Activated T-helper 2 cell treated with anti-CD3 and anti-CD28 coated beads, Interferon-gamma antibody, Interleukin-2, Interleukin-4, amounts not matched to agents 10 μg/mL and 5 μg/mL and 100 μg/mL, durations not matched to agents 14 hours and 24 hours and 36 hours (primary cell): ENCODE measurements at regions of chr13 and their contacts with region 1.

Region 1: GRCh38 chr13:77389625-77390000 is 62.7 kb upstream of the MYCBP2 start:
- DNase-seq: no peak
- H3K4me3 Mint-ChIP-seq: no peak overlapping the region
- H3K27ac Mint-ChIP-seq: peak overlapping the region; percentile 34
- H3K4me1 Mint-ChIP-seq: peaks cover 41% of the 10 kb centered on the region
- H3K27me3 Mint-ChIP-seq: peaks cover 29% of the 10 kb centered on the region

Region 2: GRCh38 chr13:77345150-77345780 is 44.3 kb before region 1 on chr13:
- intact Hi-C with region 1: loop called (anchors 1 kb)
- DNase-seq: no peak
- H3K4me3 Mint-ChIP-seq: no peak overlapping the region
- H3K27ac Mint-ChIP-seq: peak overlapping the region; percentile 80
- H3K4me1 Mint-ChIP-seq: peaks cover 14% of the 10 kb centered on the region
- H3K27me3 Mint-ChIP-seq: no peaks in the 10 kb centered on the region

Region 3: DNA sequence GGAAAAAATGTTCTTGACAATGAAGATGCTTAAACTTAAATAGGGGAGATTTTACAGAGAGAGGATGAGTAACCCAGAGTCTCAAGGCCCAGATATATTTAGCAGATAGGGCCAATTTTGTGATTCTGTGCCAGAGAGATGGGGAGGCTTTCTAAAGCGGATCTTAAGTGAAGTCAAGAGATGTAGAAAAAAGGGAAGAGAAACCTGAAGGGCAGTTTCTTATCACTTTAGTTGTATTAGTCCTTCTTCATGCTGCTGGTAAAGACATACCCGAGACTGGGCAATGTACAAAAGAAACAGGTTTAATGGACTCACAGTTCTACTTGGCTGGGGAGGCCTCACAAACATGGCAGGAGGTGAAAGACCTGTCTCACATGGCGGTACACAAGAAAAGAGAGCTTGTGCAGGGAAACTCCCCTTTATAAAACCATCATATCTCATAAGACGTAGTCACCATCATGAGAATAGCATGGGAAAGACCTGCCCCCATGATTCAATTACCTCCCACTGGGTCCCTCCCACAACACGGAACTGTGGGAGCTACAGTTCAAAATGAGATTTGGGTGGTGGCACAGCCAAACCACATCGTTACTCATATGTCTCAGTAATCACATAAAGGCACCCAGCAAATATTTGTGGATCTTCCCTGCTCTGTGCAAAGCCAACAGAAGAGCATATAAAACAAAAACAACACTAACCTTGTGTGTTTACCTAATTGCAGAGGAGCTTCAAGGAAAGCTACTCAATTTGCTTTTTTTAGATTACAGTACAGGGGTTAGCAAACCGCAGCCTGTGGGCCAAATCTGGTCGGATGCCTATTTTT is 39.9 kb after region 1 on chr13:
- intact Hi-C with region 1: loop called (anchors 1 kb)
- DNase-seq: no peak
- H3K4me3 Mint-ChIP-seq: no peak overlapping the region
- H3K27ac Mint-ChIP-seq: peak overlapping the region; percentile 60
- H3K4me1 Mint-ChIP-seq: peaks cover 13% of the 10 kb centered on the region
- H3K27me3 Mint-ChIP-seq: peaks cover 7% of the 10 kb centered on the region

Region 4: DNA sequence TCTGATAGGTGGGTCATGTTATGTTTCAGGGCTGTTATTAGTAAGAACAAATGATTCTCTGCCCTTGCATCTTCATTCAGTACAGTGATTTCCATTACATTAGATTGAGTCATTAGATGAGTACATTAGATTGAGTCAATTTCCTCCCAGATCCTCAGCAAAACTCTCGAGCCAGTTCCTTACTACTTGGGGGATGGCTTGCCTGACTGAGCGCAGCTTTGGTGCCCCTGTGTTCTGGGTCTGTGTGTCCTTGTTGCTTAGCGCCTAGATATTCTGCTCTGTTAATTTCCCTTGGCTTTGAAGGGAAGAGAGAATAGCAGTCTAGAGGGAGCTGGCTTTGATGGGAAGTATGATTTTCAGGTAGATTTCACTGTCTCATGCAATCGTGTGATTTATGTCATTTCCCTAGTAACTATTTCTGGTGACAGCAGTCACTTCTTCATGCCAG is 126.8 kb after region 1 on chr13:
- intact Hi-C with region 1: no loop called
- DNase-seq: no peak
- H3K4me3 Mint-ChIP-seq: no peak overlapping the region
- H3K27ac Mint-ChIP-seq: no peak overlapping the region
- H3K4me1 Mint-ChIP-seq: peaks cover 2% of the 10 kb centered on the region
- H3K27me3 Mint-ChIP-seq: peaks cover 2% of the 10 kb centered on the region